ENCODE measurements at regions of chr7 and their contacts with region 1.

Region 1: DNA sequence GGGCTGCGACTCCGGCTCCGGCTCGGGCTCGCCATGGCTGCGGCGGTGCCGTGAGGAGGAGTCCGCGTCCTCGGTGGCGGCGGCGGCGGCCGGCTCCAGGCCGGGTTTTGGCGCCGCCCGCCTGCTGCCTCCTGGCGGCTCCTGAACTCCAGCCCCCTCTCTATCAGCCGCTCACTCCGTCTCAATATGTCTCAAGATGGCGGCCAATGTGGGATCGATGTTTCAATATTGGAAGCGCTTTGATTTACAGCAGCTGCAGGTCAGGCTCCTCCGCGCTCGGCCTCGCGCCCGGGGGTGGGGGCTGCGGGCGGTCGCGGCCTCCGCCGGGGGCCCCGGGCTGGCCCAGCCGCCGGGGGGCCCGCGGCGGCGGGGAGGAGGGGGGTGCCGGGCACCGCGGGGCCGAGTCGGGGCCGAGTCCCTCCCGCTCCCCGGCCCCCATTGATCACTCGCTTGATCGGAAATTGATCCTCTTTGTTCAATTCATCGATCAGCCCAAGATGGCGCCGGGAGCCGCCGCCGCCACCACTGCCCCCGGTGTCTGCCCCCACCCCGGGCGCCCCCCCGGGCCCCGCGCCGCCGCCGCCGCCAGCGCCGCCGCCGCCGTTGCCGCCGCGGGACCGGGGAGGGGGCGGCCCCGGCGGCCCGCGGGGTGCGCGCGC is 1.5 kb upstream of the CUX1 start:
- DNase-seq: peak; percentile 78 to 91 (median 90)
- ATAC-seq: peak; percentile 82 to 87
- H3K4me3 ChIP-seq: peak overlapping the region; percentile 100
- H3K27ac ChIP-seq: peak overlapping the region; percentile 79
- H3K4me1 ChIP-seq: no peaks in the 10 kb centered on the region
- H3K27me3 ChIP-seq: no peaks in the 10 kb centered on the region

Region 2: DNA sequence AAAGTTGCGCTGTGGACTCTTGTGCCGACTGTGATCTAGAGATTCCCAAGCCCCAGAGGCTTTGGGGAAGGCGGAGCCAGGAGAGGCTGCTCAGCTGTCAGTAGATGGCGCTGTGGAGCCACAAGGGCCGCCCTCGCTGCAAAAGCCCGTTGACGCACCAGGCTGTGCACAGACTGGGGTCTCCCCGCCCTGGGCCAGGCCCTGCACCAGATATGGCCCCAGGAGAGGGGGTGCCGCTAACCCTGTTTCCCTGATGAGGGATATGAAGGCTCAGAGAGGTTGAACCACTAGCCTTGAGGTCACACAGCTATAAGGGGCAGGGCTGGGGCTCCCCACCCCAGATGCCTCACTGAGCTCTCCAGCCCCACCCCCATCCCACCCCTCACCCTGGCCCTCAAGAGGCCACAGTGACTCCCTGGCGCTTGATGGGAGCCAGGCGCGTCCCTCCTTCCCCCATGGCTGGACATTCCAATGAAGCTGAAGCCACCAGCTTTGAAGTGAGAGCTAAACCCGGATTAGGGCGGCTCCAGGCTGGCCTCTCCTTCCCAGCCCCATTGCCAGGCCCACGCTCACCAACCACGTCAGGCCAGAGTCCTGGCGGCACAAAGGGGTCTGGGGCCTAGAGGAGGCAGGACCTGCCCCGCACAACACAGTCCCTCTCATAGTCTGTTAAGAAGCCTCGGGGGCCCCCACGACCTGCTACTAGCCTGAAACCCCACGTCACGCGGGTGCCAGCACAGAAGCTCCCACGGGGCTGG is 213.3 kb before region 1 on chr7:
- intact Hi-C with region 1: loop called in 1 of 4 experiments (anchors 10 kb)
- DNase-seq: peak; percentile 80 to 90 (median 89)
- ATAC-seq: peak; percentile 87 to 90
- H3K4me3 ChIP-seq: no peak overlapping the region
- H3K27ac ChIP-seq: no peak overlapping the region
- H3K4me1 ChIP-seq: no peaks in the 10 kb centered on the region
- H3K27me3 ChIP-seq: no peaks in the 10 kb centered on the region

Region 3: DNA sequence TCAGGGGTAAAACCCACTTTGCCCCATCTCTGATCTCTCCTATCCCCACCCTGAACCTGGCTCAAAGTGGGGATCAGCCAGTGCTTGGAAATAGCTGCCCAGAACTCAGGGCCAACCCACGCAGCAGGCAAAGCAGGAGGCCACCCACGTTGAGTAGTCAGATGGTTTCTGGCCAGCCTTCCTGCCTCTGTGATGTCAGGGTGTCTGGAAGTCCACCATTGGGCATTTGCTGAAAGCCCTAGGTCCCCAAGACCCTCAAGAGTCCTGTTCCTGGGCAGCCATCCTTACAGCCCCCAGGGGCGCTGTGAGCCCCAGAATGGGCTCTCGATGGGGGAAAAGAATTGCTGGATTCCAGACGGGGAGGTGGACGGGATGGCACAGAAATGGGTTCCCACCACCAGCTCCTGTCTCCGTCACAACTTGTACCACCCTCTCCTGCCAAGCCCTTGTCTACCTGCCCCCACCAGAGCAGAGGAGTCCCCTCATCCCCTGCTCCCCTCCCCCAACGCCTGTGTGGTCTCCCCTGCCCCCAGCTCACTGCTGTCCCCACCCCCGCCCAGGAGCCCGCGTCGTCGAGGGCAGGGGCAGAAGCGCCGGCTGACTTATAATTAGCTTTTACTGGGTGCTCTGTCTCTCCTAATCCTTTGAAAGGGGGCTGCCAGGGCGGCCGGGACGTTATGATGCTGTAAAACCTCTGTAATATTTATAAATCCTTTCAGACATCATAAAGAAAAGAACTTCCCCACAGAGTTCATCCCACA is 190.8 kb before region 1 on chr7:
- intact Hi-C with region 1: no loop called
- DNase-seq: peak in 2 of 3 donors; percentile 11 to 25
- ATAC-seq: no peak
- H3K4me3 ChIP-seq: no peak overlapping the region
- H3K27ac ChIP-seq: no peak overlapping the region
- H3K4me1 ChIP-seq: no peaks in the 10 kb centered on the region
- H3K27me3 ChIP-seq: no peaks in the 10 kb centered on the region

Region 4: GRCh38 chr7:101688183-101688831 is 127.7 kb before region 1 on chr7:
- intact Hi-C with region 1: loop called in 3 of 4 experiments (anchors 5 kb)
- DNase-seq: peak; percentile 83 to 94 (median 93)
- ATAC-seq: peak; percentile 88 to 92
- H3K4me3 ChIP-seq: no peak overlapping the region
- H3K27ac ChIP-seq: no peak overlapping the region
- H3K4me1 ChIP-seq: no peaks in the 10 kb centered on the region
- H3K27me3 ChIP-seq: no peaks in the 10 kb centered on the region

Region 5: GRCh38 chr7:101729241-101729993 is 86.5 kb before region 1 on chr7:
- intact Hi-C with region 1: no loop called
- DNase-seq: no peak
- ATAC-seq: peak in 1 of 2 donors; percentile 32
- H3K4me3 ChIP-seq: no peak overlapping the region
- H3K27ac ChIP-seq: no peak overlapping the region
- H3K4me1 ChIP-seq: peaks cover 2% of the 10 kb centered on the region
- H3K27me3 ChIP-seq: no peaks in the 10 kb centered on the region

Region 6: DNA sequence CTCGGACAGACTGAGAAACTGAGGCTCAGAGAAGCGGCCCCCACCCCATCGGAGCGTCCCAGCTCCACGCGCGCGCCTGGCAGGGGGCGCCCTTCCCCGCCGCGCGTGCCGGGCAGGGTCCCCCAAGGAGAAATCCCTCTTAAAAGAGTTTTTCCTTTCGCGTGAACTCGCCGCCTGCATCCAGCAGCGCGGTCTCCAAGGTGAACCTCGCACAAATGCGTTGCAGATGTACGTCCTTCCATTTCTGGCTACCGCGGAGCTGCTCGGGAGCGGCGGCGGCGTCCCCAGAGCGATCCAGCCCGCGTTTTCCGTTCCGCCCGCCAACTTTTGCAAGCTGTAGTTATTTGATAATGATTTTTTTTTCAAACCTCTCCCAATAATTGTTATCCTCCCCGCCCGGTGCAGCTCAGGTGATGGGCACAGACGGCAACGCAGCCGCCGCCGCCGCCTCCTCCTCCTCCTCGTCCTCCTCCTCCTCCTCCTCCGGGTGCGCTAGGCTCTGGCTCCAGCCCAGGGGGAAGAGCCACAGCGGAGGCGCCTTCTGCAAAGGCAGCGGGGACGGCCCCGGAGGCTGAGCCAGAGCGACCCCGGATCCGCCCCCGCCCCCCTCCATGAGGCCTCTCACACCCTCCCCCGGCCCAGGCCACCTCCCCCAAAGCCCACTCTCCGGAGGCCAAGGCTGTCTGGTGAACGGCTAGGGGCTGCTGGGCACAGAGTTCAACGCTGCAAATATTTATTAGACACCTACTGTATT is 72.5 kb before region 1 on chr7:
- intact Hi-C with region 1: loop called in 3 of 4 experiments (anchors 5 to 10 kb)
- DNase-seq: peak; percentile 50 to 82 (median 81)
- ATAC-seq: peak; percentile 69 to 76
- H3K4me3 ChIP-seq: peak overlapping the region; percentile 34
- H3K27ac ChIP-seq: no peak overlapping the region
- H3K4me1 ChIP-seq: no peaks in the 10 kb centered on the region
- H3K27me3 ChIP-seq: no peaks in the 10 kb centered on the region

Region 7: GRCh38 chr7:101936611-101937231 is 120.8 kb after region 1 on chr7:
- intact Hi-C with region 1: loop called in 1 of 4 experiments (anchors 10 kb)
- DNase-seq: peak; percentile 68 to 80 (median 76)
- ATAC-seq: peak; percentile 45 to 67
- H3K4me3 ChIP-seq: peak overlapping the region; percentile 30
- H3K27ac ChIP-seq: peak overlapping the region; percentile 93
- H3K4me1 ChIP-seq: peaks cover 15% of the 10 kb centered on the region
- H3K27me3 ChIP-seq: no peaks in the 10 kb centered on the region

Region 8: DNA sequence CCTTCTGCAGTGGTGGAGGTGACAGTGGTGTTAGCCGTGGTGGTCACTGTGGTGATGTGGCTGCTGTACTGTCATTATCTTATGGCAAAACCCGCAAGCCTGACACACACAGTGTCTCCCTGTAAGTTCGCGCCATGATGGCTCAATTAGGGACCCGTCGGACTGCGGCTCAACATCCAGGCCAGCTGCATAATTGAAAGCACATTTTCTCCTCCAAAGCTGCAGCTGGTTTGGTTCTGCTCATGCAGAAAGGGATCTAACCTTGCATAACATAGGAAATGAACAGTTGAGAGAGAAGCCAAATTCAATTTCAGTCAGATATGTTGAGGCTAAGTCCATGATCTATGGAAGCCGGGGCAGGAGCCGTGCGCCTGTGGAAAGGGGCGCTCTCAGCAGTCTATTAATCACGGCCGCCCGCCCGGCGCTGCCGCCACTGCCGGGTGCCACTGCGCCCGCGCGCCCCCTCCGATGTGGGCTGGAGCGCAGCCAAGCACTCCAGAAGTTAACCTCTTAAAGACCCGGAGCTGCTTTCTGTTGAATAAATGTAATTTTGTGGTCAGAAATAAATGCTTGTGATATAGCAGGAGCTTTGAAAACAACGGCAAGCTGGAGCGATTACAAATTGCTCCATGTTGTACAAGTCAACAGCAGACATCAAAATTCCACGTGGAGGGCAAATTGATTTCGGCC is 229.2 kb after region 1 on chr7:
- intact Hi-C with region 1: loop called in 1 of 4 experiments (anchors 10 kb)
- DNase-seq: peak; percentile 65 to 86 (median 81)
- ATAC-seq: peak; percentile 68 to 75
- H3K4me3 ChIP-seq: peak overlapping the region; percentile 13
- H3K27ac ChIP-seq: peak overlapping the region; percentile 77
- H3K4me1 ChIP-seq: peaks cover 5% of the 10 kb centered on the region
- H3K27me3 ChIP-seq: no peaks in the 10 kb centered on the region

Region 9: DNA sequence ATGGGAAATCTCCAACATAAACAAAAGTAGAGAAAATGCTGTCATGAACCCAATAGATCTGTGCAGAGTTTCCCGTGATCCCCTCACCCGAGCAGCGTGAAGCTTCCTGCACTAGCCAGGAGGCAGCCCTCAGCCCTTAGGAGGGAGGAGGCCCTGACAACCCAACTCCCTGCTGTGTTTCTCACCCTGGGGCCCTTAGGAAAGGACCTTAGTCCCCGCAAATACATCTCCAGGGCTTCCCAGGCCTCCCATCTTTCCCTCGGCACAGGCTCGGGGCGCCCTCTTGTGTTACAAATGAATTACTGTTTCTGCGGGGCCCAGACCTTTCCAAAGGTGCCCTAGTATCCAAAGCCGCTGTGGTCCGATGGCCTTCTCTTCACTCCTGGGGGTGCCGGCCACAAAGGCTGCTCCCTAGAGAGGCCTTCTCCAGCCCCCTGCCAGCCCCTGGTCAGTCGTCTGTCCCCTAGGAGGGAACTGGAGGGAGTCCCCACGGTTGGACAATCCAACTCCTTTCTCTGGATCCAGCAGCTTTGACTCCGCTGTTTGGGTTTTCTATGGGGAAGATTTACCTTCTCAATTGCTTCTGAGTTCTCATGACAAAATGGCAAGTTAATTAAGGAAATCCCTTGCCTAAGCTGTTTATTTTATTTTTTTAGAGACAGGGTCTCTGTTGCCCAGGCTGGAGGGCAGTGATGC is 420.8 kb after region 1 on chr7:
- intact Hi-C with region 1: loop called in 2 of 4 experiments (anchors 10 kb)
- DNase-seq: peak; percentile 56 to 81 (median 80)
- ATAC-seq: peak; percentile 71 to 84
- H3K4me3 ChIP-seq: no peak overlapping the region
- H3K27ac ChIP-seq: no peak overlapping the region
- H3K4me1 ChIP-seq: no peaks in the 10 kb centered on the region
- H3K27me3 ChIP-seq: no peaks in the 10 kb centered on the region